Activated CD8-positive, alpha-beta T cell treated with anti-CD3 and anti-CD28 coated beads for 36 hours (primary cell): ENCODE measurements at regions of chr12 and their contacts with region 1.

Region 1: GRCh38 chr12:53200458-53201176 is 6.4 kb downstream of the ITGB7 start:
- DNase-seq: peak; percentile 64
- ATAC-seq: peak; percentile 41
- H3K4me3 Mint-ChIP-seq: peak overlapping the region; percentile 43
- H3K27ac Mint-ChIP-seq: peak overlapping the region; percentile 83
- H3K4me1 Mint-ChIP-seq: peaks cover 70% of the 10 kb centered on the region
- H3K27me3 Mint-ChIP-seq: no peaks in the 10 kb centered on the region
- CTCF ChIP-seq: no peak

Region 2: DNA sequence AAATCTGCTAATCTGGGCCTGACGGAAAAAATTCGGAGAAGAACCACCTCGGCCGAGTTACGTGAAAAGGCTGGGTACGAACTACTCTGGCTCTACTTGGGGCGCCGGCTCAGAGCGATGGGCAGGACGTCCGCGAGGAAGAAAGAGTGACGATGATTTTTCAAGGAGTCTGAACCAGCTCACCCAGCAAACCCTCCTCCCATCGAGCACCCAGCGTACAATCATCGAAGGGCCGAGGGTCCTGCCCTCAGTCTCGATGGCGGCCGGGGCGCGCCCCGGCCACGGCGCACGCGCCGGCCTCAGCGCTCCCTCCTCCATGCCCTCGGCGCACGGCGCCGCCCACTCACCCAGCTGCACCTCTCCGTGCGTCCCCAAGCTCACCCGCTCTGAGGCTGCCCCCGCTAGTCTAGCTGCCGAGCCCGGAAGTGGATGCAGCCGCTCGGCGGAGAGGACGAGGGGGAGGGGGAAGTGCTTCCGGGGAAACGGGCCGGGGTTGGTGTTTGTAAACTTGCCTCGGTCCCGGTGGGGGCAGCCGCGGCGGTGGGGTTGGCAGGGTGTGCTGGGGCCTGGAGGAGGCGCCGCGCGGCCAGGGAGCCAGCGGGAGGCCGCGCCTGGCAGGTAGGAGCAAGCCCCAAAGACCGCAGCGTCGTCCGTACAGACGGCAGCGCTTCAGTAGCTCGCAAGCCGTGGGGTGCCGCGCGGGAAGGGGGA is 20.2 kb before region 1 on chr12 and contains the starts of genes CSAD and ZNF740:
- CTCF ChIA-PET with region 1: interaction called, 60 read pairs
- POLR2A ChIA-PET with region 1: interaction called, 91 read pairs
- intact Hi-C with region 1: no loop called
- DNase-seq: peak; percentile 99
- ATAC-seq: peak; percentile 95
- H3K4me3 Mint-ChIP-seq: peak within 1 kb of the TSS; percentile 89
- H3K27ac Mint-ChIP-seq: peak within 1 kb of the TSS; percentile 96
- H3K4me1 Mint-ChIP-seq: peaks cover 51% of the 10 kb centered on the region
- H3K27me3 Mint-ChIP-seq: no peaks in the 10 kb centered on the region
- CTCF ChIP-seq: no peak
- total RNA-seq, gene CSAD: 13.8 to 18.6 TPM
- total RNA-seq, gene ZNF740: 31.3 to 35.9 TPM

Region 3: GRCh38 chr12:53190108-53190729 is 10.4 kb before region 1 on chr12:
- CTCF ChIA-PET with region 1: interaction called, 60 read pairs
- POLR2A ChIA-PET with region 1: interaction called, 91 read pairs
- intact Hi-C with region 1: no loop called
- DNase-seq: peak; percentile 67
- ATAC-seq: peak; percentile 94
- H3K4me3 Mint-ChIP-seq: no peak overlapping the region
- H3K27ac Mint-ChIP-seq: peak overlapping the region; percentile 77
- H3K4me1 Mint-ChIP-seq: peaks cover 17% of the 10 kb centered on the region
- H3K27me3 Mint-ChIP-seq: no peaks in the 10 kb centered on the region
- CTCF ChIP-seq: peak; percentile 77

Region 4: DNA sequence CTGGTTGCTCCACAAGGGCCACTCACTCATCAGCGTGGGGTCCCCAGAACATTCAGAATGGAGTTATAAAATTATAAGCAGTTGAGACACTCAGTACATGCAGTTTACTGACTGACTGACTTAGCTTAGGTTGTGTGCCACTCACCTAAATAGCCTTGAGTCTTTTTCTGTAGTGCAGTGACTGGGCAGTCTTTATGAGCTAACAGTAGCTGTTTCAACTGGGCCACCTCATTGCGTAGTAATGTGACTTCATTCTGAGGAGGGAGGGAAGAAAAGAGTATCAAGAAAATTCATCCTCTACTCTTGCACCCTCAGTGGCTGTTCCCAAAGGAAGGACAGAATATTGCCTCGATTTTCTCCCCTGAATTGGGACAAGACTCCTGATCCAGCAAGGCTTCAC is 322.5 kb after region 1 on chr12:
- CTCF ChIA-PET with region 1: no interaction called
- POLR2A ChIA-PET with region 1: no interaction called
- intact Hi-C with region 1: no loop called
- DNase-seq: no peak
- ATAC-seq: no peak
- H3K4me3 Mint-ChIP-seq: no peak overlapping the region
- H3K27ac Mint-ChIP-seq: no peak overlapping the region
- H3K4me1 Mint-ChIP-seq: no peaks in the 10 kb centered on the region
- H3K27me3 Mint-ChIP-seq: no peaks in the 10 kb centered on the region
- CTCF ChIP-seq: no peak